Cardiac septum (tissue), 1 donor: ENCODE measurements at regions of chr15 and their contacts with region 1.

Region 1: DNA sequence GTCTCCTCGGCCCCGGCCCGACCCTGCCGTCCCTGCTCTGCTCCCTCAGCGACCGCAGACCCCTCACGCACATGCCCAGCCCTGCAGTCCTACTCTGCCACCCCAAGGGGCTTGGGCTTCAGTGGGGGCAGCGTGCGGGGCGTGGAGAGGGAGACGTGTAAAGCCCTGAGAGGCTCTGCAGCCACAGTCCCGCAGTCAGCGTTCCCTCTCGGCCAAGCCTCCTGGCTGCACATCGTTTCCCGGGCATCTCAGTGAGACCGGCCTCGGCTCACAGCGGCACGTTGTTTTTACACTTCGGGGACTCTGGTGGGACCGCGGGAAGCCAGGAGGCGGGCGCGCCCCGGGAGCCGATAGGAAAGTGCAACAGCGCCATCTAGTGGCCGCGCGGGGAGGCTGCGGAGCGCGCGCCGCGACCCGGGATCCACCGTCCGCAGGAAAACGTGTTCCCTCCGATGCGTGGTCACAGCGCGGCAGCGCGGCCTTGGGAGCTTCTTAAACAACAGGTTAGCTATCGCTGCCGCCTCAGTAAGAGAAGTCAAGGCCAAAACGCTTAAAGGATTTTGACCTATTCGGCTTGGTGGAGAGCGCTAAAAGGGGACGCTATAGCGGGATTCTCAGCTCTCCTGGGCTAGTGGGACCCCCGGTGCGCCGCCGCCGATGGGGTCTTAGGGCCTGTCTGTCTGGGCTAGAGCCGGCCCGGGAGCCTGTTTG is 226.8 kb upstream of the IGF1R start:
- DNase-seq: peak; percentile 80

Region 2: DNA sequence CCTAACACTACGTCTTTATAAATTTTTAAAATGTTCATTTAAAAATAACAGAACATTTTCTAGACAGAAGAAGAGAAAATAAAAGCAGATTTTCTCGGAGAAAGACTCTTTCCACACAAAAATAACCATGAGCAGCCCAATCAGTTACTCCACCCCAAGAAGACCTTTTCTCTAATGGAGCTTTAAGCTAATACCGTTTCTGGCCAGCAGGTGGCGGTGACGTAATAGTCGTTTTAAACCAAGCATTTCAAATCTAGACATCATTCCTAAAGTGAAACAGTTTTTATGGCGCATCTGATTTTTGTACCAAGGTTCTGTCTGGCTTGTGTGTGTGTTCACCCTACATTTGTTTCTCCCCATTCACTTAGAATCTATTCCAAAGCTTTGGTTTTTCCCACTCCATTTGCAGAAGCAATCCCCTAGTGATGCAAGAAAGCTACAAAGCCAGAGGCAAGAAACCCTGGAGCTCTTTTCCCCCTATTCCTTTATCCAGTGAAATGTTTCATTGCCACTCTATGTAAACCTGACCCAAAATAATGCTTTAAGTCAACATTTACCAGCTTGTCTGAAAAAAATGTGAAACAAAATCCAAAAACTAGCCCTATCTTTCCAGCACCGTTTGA is 109.9 kb before region 1 on chr15:
- intact Hi-C with region 1: loop called (anchors 2 kb)
- DNase-seq: no peak

Region 3: GRCh38 chr15:98554272-98555172 is 132.9 kb after region 1 on chr15:
- intact Hi-C with region 1: no loop called
- DNase-seq: no peak

Region 4: GRCh38 chr15:98668566-98669308 is 247.2 kb after region 1 on chr15:
- intact Hi-C with region 1: no loop called
- DNase-seq: no peak